Aorta (tissue), 5 donors: ENCODE measurements at regions of chr5 and their contacts with region 1.

Region 1: DNA sequence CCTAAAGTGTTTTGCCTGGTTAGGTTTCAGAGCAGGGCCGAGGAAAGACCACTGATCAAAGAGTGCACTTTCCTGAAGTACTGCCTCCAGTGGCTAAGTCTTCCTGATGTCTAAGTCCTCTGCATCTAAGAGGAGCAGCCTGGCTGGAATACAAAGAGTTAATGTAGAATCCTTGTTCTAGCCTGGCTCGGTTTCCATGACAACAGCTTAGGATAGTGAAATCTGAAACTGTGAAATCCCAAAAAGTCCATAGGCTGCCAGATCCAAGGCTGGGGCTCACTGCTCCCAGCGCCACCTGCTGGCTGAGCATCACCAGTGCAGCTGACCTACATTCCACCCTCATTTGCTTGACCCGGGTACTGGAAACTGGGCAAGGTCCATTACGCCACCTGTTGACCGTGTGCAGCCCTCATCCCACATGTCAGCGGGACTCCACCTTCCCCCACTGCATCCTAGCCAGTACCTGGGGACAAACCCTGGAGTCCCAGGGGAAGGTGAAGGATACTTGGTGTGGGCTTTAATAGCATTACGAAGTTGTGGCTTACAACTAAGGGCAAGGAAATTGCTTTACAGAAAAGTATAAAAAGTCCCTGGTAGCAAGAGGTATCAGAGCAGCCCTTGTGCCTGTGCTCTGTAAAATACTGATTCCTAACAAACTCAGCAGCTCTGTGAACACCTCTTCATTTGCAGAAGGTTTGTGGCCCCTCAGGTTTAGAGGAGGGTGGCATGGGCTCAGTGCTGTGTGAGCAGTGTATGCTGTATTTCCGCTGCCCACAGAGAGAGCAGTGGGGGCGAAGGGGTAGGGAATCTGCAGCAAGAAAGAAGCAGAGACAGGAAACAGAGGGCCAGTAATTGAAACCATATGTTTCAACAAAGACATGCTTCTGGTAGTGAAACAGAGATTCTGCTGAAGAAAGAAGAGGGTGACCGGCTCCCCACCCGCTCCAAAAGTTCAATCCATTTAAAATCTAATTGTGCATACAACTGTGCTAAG is 36.0 kb downstream of the PCDHGC5 start:
- DNase-seq: peak; percentile 86 to 93
- ATAC-seq: peak; percentile 95
- H3K4me3 ChIP-seq: no peak overlapping the region
- H3K27ac ChIP-seq: peak overlapping the region; percentile 29 to 63
- H3K4me1 ChIP-seq: no peaks in the 10 kb centered on the region
- H3K27me3 ChIP-seq: no peaks in the 10 kb centered on the region

Region 2: GRCh38 chr5:141412854-141413539 is 111.9 kb before region 1 on chr5 and contains the start of gene PCDHGA10:
- intact Hi-C with region 1: loop called in 1 of 2 experiments (anchors 10 kb)
- DNase-seq: peak in 1 of 2 donors; percentile 61
- ATAC-seq: no peak
- H3K4me3 ChIP-seq: no peak within 1 kb of the TSS
- H3K27ac ChIP-seq: no peak within 1 kb of the TSS
- H3K4me1 ChIP-seq: no peaks in the 10 kb centered on the region
- H3K27me3 ChIP-seq: no peaks in the 10 kb centered on the region
- total RNA-seq, gene PCDHGA10: 6.1 to 11.4 TPM

Region 3: GRCh38 chr5:141420855-141421496 is 103.9 kb before region 1 on chr5 and contains the start of gene PCDHGA11:
- intact Hi-C with region 1: loop called (anchors 5 to 10 kb)
- DNase-seq: no peak
- ATAC-seq: no peak
- H3K4me3 ChIP-seq: peak within 1 kb of the TSS in 1 of 2 donors; percentile 0
- H3K27ac ChIP-seq: no peak within 1 kb of the TSS
- H3K4me1 ChIP-seq: no peaks in the 10 kb centered on the region
- H3K27me3 ChIP-seq: no peaks in the 10 kb centered on the region
- total RNA-seq, gene PCDHGA11: 7.1 to 9.2 TPM

Region 4: GRCh38 chr5:141475625-141476131 is 49.2 kb before region 1 on chr5 and contains the start of gene PCDHGC3:
- intact Hi-C with region 1: loop called in 1 of 2 experiments (anchors 2 kb)
- DNase-seq: peak; percentile 95
- ATAC-seq: peak; percentile 96
- H3K4me3 ChIP-seq: peak within 1 kb of the TSS; percentile 6 to 47
- H3K27ac ChIP-seq: peak within 1 kb of the TSS in 1 of 2 donors; percentile 62
- H3K4me1 ChIP-seq: peaks cover 0 to 9% of the 10 kb centered on the region in 2 donors
- H3K27me3 ChIP-seq: no peaks in the 10 kb centered on the region
- total RNA-seq, gene PCDHGC3: 67.3 to 116 TPM